HEK293 (cell line): ENCODE measurements at regions of chr19 and their contacts with region 1.

Region 1: GRCh38 chr19:46766569-46767317 is 20.5 kb upstream of the STRN4 start:
- H3K4me3 ChIP-seq: no peak overlapping the region
- H3K27ac ChIP-seq: no peak overlapping the region
- H3K4me1 ChIP-seq: peaks cover 12% of the 10 kb centered on the region
- CTCF ChIP-seq: peak; percentile 90

Region 2: GRCh38 chr19:46746281-46747013 is 20.3 kb before region 1 on chr19 and contains the start of gene STRN4:
- CTCF ChIA-PET with region 1: interaction called, 11 read pairs
- POLR2A ChIA-PET with region 1: no interaction called
- H3K4me3 ChIP-seq: peak within 1 kb of the TSS; percentile 70
- H3K27ac ChIP-seq: peak within 1 kb of the TSS; percentile 99
- H3K4me1 ChIP-seq: peaks cover 6% of the 10 kb centered on the region
- CTCF ChIP-seq: no peak

Region 3: GRCh38 chr19:46753420-46754155 is 13.2 kb before region 1 on chr19:
- CTCF ChIA-PET with region 1: interaction called, 66 read pairs
- POLR2A ChIA-PET with region 1: interaction called, 3 read pairs
- H3K4me3 ChIP-seq: no peak overlapping the region
- H3K27ac ChIP-seq: no peak overlapping the region
- H3K4me1 ChIP-seq: no peaks in the 10 kb centered on the region
- CTCF ChIP-seq: peak; percentile 57

Region 4: DNA sequence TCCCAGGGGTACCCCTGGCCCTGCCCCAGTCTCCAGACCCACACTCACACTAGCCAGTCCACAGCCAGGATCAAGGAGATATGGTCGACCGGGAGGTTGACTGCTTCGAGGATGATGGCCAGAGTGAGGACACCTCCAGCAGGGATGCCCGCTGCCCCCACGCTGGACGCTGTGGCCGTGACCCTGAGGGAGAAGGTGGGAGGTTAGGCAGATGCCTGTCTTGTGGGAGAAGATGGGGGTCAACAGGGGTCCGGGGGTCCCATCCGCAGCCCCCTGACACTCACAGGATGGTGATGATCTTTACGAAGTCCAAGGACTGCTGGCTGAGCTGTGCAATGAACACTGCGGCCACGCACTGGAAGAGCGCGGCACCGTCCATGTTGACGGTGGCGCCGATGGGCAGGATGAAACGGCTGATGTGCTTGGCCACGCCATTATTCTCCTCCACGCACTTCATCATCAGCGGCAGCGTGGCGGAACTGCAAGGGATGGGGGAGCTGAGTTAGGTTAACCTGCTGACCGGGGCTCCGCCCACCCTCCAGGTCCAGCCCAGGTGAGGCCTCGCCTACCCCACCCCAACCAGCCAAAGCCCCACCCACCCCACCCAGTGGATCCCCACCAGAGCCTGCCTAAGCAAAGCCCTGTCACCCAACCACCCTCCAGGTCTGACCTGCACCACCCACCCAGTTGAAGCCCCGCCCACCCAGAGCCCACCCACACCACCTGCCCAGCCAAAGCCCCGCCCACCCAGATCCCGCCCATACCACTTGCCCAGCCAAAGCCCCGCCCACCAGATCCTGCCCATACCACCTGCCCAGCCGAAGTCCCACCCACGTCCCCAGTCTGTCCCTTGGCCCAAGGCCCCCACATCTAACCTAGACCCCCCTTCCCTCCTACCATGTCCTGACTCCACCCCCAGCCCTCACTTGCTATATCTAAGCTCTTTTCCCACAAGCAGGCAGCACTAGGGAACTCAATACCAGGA is 10.5 kb after region 1 on chr19:
- CTCF ChIA-PET with region 1: interaction called, 22 read pairs
- POLR2A ChIA-PET with region 1: interaction called, 8 read pairs
- H3K4me3 ChIP-seq: no peak overlapping the region
- H3K27ac ChIP-seq: no peak overlapping the region
- H3K4me1 ChIP-seq: no peaks in the 10 kb centered on the region
- CTCF ChIP-seq: no peak

Region 5: DNA sequence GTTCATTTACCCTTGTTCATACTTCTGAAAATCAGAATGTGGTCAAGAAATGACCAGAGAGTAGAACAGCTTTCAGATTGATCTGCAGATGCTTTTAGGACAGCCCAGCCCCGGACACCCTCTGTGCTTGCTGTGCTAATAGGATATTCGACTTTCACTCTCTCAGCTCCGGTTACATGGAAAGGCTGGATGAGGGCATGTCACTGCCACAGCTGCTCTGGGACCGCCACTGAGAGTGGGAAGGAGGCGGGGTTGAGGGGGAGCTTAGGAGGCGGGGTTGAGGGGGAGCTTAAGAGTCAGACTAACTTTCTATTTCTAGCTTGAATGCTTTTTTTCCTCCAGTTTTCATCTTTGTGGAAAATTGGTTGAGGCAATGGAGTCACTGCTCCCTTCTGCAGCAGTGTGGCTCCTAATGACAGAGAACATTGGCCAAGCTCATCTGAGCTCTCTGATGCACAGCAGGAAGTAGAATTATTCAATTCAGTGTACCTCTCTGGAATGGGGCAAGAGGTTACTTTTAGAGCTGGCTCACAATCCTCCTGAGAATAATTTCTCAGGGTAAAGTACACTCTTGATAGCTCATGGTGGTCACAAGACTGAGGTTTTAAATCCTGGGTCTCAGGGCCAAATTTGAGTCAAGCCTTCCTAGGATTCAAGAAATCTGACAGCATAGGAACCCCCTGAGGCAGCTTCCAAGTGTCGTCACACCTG is 178.3 kb after region 1 on chr19:
- CTCF ChIA-PET with region 1: no interaction called
- POLR2A ChIA-PET with region 1: no interaction called
- H3K4me3 ChIP-seq: no peak overlapping the region
- H3K27ac ChIP-seq: peak overlapping the region; percentile 48
- H3K4me1 ChIP-seq: peaks cover 22% of the 10 kb centered on the region
- CTCF ChIP-seq: no peak